ENCODE measurements at regions of chr12 and their contacts with region 1.

Region 1: DNA sequence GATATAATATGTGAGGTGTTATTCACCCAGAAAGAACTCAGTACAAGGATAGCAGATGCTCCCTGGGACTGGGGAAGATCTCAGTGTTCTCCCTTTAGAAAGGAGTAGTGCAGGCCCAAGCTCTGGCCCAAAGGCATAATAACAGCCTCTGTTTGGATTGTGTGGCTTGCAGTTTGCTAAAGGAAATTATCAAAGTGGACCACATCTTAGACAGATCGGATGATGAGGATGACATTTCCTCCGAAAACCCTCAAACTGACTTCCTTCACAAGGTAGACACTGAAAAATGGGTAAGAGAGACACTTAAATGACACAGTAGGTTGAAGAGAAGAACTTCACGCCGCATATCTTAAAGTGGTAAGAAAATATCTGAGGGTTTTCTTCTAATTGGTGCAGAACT is 26.1 kb downstream of the SMCO2 start:
- DNase-seq: peak in 1 of 9 experiments; percentile 7
- ATAC-seq: no peak
- H3K4me3 ChIP-seq: no peak overlapping the region
- H3K4me3 Mint-ChIP-seq: no peak overlapping the region
- H3K27ac ChIP-seq: no peak overlapping the region
- H3K27ac Mint-ChIP-seq: no peak overlapping the region
- H3K4me1 ChIP-seq: peaks cover 13% of the 10 kb centered on the region
- H3K4me1 Mint-ChIP-seq: peaks cover 21% of the 10 kb centered on the region
- H3K27me3 ChIP-seq: no peaks in the 10 kb centered on the region
- H3K27me3 Mint-ChIP-seq: no peaks in the 10 kb centered on the region
- CTCF ChIP-seq: no peak

Region 2: DNA sequence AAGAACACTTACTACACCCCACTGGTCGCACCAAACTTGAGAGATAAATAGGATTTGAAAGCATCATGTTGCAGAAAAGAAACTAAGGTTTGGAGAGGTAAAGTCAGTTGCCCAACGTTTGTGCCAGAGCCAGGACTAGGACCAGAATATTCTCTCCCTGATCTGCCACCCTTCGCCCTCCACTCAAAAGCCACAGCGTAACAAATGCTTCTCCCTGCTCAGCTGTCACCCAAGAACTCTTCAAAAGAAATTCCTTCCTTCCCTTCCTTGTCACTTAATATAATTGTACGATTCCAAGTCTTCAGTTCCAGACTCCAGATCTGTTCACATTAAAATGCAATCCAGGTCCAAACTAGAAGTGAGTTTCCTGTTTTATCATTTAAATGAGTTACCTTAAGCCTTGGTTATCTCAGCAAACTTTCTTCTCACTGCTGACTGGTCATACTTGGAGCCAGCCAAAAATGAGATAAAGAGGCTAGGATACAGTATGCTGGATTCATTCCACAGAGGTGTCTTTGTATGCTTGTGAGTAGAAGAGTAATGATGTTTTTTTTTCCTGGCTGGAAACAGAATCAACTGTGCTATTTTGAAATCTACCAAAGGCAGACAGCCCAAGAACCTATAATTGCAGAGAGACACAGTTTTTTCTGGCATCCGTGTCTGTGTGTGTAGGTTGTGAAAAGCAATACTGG is 38.6 kb after region 1 on chr12:
- CTCF ChIA-PET with region 1: no interaction called
- POLR2A ChIA-PET with region 1: no interaction called
- intact Hi-C with region 1: loop called in 1 of 2 experiments (anchors 1 kb)
- DNase-seq: no peak
- ATAC-seq: no peak
- H3K4me3 ChIP-seq: no peak overlapping the region
- H3K4me3 Mint-ChIP-seq: no peak overlapping the region
- H3K27ac ChIP-seq: no peak overlapping the region
- H3K27ac Mint-ChIP-seq: no peak overlapping the region
- H3K4me1 ChIP-seq: no peaks in the 10 kb centered on the region
- H3K4me1 Mint-ChIP-seq: no peaks in the 10 kb centered on the region
- H3K27me3 ChIP-seq: no peaks in the 10 kb centered on the region
- H3K27me3 Mint-ChIP-seq: no peaks in the 10 kb centered on the region
- CTCF ChIP-seq: no peak